Activated CD4-positive, alpha-beta T cell treated with anti-CD3 and anti-CD28 coated beads for 36 hours (primary cell): ENCODE measurements at regions of chr1 and their contacts with region 1.

Region 1: GRCh38 chr1:193042766-193043691 is 16.1 kb downstream of the UCHL5 start:
- DNase-seq: no peak
- ATAC-seq: peak; percentile 36
- H3K4me3 Mint-ChIP-seq: no peak overlapping the region
- H3K27ac Mint-ChIP-seq: no peak overlapping the region
- H3K4me1 Mint-ChIP-seq: peaks cover 6% of the 10 kb centered on the region
- H3K27me3 Mint-ChIP-seq: no peaks in the 10 kb centered on the region

Region 2: DNA sequence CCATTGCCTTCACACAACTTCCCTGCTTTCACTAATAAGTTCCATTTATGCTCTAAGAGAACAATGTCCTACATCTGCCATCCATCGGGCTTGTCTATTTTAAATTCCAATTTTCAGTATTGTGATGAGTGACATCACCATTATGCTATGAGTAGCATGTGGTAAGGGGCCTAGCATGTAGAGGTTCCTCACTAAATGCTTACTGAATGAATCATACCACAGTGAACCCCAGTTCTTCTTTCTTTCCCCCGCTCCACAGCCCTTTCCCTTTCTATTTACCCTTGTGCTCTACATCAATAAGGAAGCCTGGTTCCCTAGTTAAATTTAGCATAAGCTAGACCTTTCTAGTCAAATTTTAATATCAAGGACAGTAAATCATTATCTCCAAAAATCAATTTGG is 1079.7 kb before region 1 on chr1:
- CTCF ChIA-PET with region 1: no interaction called
- POLR2A ChIA-PET with region 1: no interaction called
- intact Hi-C with region 1: no loop called
- DNase-seq: no peak
- ATAC-seq: no peak
- H3K4me3 Mint-ChIP-seq: no peak overlapping the region
- H3K27ac Mint-ChIP-seq: no peak overlapping the region
- H3K4me1 Mint-ChIP-seq: no peaks in the 10 kb centered on the region
- H3K27me3 Mint-ChIP-seq: no peaks in the 10 kb centered on the region

Region 3: DNA sequence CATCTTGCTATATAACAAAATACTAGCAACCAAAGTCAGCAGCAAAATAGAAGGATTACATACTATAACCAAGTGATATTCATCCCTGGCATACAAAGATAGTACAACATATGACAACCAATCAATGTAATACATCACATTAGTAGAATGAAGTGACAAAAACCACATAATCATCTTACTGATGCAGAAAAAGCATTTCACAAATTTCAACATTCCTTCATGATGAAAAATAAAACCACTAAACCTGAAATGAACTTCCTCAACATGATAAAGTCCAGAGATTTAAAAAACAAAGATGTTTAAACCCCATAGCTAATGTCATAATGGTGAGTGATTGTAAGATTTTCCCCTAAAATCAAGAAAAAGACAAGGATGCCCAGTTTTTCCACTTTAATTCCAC is 35.0 kb after region 1 on chr1:
- CTCF ChIA-PET with region 1: no interaction called
- POLR2A ChIA-PET with region 1: no interaction called
- intact Hi-C with region 1: no loop called
- DNase-seq: no peak
- ATAC-seq: no peak
- H3K4me3 Mint-ChIP-seq: no peak overlapping the region
- H3K27ac Mint-ChIP-seq: no peak overlapping the region
- H3K4me1 Mint-ChIP-seq: peaks cover 2% of the 10 kb centered on the region
- H3K27me3 Mint-ChIP-seq: no peaks in the 10 kb centered on the region

Region 4: GRCh38 chr1:193094112-193094511 is 51.1 kb after region 1 on chr1:
- CTCF ChIA-PET with region 1: no interaction called
- POLR2A ChIA-PET with region 1: no interaction called
- intact Hi-C with region 1: loop called in 1 of 2 experiments (anchors 5 kb)
- DNase-seq: no peak
- ATAC-seq: no peak
- H3K4me3 Mint-ChIP-seq: no peak overlapping the region
- H3K27ac Mint-ChIP-seq: no peak overlapping the region
- H3K4me1 Mint-ChIP-seq: no peaks in the 10 kb centered on the region
- H3K27me3 Mint-ChIP-seq: no peaks in the 10 kb centered on the region